ENCODE measurements at regions of chr1 and their contacts with region 1.

Region 1: DNA sequence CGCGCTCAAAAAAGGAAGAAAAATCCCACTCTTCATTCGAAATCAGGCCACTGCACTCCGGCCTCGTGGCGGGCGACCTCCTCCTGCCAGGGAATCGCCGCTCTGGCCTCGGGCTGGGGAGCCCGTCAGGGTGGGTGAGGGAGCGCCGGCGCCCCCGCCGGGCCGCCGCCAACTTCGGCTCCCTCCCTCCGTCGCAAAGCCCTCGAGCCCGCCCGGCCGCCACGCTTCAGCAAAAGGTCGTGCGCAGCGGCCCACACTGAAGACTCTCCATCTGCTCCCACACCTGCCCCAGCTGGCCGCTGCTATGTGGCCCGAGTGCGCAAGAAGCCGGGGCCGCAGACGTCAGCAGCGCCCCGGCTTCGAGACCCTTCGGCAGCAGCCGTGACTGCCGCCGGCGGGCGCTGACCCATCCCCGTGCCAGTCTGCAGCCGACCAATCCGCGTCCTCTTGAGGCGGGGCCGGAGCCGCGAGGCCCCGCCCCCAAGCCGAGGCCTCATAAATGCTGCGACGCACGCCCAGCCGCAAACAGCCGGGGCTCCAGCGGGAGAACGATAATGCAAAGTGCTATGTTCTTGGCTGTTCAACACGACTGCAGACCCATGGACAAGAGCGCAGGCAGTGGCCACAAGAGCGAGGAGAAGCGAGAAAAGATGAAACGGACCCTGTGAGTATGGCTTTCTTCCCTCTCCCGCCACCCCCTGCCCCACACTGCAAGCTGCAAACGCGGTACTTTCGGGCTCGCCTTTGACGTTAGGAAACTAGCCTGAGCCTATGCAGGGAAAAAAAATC is at the start of gene RGS2:
- DNase-seq: peak; percentile 90 to 94 (median 93)
- H3K4me3 ChIP-seq: peak within 1 kb of the TSS; percentile 90 to 100 (median 99)
- H3K4me3 Mint-ChIP-seq: peak within 1 kb of the TSS; percentile 98 to 100
- H3K27ac ChIP-seq: peak within 1 kb of the TSS; percentile 89 to 93
- H3K27ac Mint-ChIP-seq: peak within 1 kb of the TSS; percentile 97 to 100 (median 99)
- H3K4me1 ChIP-seq: peaks cover 38 to 51% of the 10 kb centered on the region in 2 donors
- H3K4me1 Mint-ChIP-seq: peaks cover 48% of the 10 kb centered on the region
- H3K27me3 ChIP-seq: no peaks in the 10 kb centered on the region
- H3K27me3 Mint-ChIP-seq: peaks cover 0 to 15% (median 0%) of the 10 kb centered on the region in 3 donors
- CTCF ChIP-seq: no peak
- polyA plus RNA-seq, gene RGS2: 974 to 3,307 (median 1,708) TPM

Region 2: DNA sequence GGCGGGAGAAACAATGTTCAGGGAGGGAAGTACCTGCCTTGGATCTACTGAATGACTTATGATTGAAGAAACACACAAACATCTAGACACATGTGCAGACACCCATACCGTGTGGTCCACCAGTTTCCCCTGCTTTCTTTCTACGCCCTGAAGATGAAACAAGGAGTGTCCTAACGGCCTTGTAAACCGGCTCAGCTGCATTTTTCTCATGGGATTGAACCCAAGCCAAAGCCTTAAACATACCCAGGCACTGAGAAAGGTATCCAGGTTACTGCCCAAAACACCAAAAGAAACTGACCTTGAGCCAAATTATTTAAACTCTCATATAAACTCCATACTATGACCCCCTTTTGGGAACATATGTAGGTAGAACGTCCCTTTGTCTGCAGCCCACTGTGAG is 1280.4 kb before region 1 on chr1:
- intact Hi-C with region 1: no loop called
- DNase-seq: no peak
- H3K4me3 ChIP-seq: no peak overlapping the region
- H3K4me3 Mint-ChIP-seq: no peak overlapping the region
- H3K27ac ChIP-seq: no peak overlapping the region
- H3K27ac Mint-ChIP-seq: no peak overlapping the region
- H3K4me1 ChIP-seq: peaks cover 0 to 6% of the 10 kb centered on the region in 2 donors
- H3K4me1 Mint-ChIP-seq: peaks cover 12% of the 10 kb centered on the region
- H3K27me3 ChIP-seq: no peaks in the 10 kb centered on the region
- H3K27me3 Mint-ChIP-seq: peaks cover 0 to 2% (median 0%) of the 10 kb centered on the region in 3 donors
- CTCF ChIP-seq: no peak

Region 3: DNA sequence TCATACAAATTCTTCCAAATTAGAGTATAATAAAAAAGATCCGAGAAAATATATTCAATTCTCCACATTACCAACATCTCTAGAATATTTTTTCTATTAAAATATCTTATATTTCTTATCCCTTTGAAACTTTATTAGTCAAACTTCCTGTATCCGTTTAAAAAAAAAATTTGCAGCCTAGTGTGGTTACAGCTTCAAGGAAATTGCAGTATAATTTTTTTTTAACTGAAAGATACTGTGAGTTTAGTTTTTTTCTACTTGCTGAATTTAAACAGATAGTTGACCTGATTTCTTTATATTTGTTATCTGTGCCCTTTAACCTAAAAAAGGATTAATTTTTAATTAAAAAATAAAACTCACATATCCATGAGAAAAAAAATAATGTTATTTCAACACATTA is 648.9 kb before region 1 on chr1:
- intact Hi-C with region 1: loop called in 1 of 2 experiments (anchors 5 kb)
- DNase-seq: peak in 2 of 3 donors; percentile 23 to 62
- H3K4me3 ChIP-seq: peak overlapping the region; percentile 83 to 99 (median 88)
- H3K4me3 Mint-ChIP-seq: peak overlapping the region; percentile 73 to 94
- H3K27ac ChIP-seq: peak overlapping the region in 1 of 2 donors; percentile 85
- H3K27ac Mint-ChIP-seq: peak overlapping the region in 6 of 7 donors; percentile 41 to 98 (median 94)
- H3K4me1 ChIP-seq: peaks cover 52 to 71% of the 10 kb centered on the region in 2 donors
- H3K4me1 Mint-ChIP-seq: peaks cover 42% of the 10 kb centered on the region
- H3K27me3 ChIP-seq: no peaks in the 10 kb centered on the region
- H3K27me3 Mint-ChIP-seq: no peaks in the 10 kb centered on the region
- CTCF ChIP-seq: no peak

Region 4: GRCh38 chr1:192609110-192610079 is 199.3 kb before region 1 on chr1:
- intact Hi-C with region 1: loop called (anchors 5 to 10 kb)
- DNase-seq: peak; percentile 84 to 90 (median 87)
- H3K4me3 ChIP-seq: peak overlapping the region; percentile 8 to 59 (median 43)
- H3K4me3 Mint-ChIP-seq: peak overlapping the region in 1 of 2 donors; percentile 77
- H3K27ac ChIP-seq: peak overlapping the region in 1 of 2 donors; percentile 21
- H3K27ac Mint-ChIP-seq: peak overlapping the region; percentile 57 to 89 (median 86)
- H3K4me1 ChIP-seq: peaks cover 12 to 18% of the 10 kb centered on the region in 2 donors
- H3K4me1 Mint-ChIP-seq: peaks cover 18% of the 10 kb centered on the region
- H3K27me3 ChIP-seq: no peaks in the 10 kb centered on the region
- H3K27me3 Mint-ChIP-seq: peaks cover 0 to 4% (median 0%) of the 10 kb centered on the region in 3 donors
- CTCF ChIP-seq: no peak

Region 5: DNA sequence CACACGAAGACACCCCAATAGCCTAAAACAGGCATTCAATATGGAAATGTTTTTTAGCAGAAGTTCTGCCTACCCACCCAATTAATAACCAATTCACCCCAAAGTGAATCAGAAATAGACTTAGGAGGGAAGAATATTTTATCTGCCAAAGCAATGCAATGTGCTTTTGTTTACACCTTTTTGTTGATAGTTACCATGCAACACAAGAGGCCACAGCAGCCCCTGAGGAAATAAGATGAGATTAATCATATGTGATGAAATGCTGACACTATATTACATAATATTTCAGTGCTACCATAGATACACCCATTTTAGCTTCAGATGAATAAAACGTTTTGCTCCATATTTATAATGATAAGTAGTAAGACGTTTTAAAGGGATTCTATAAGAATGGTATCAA is 60.8 kb before region 1 on chr1:
- intact Hi-C with region 1: no loop called
- DNase-seq: peak; percentile 2 to 46 (median 33)
- H3K4me3 ChIP-seq: no peak overlapping the region
- H3K4me3 Mint-ChIP-seq: no peak overlapping the region
- H3K27ac ChIP-seq: no peak overlapping the region
- H3K27ac Mint-ChIP-seq: no peak overlapping the region
- H3K4me1 ChIP-seq: no peaks in the 10 kb centered on the region
- H3K4me1 Mint-ChIP-seq: no peaks in the 10 kb centered on the region
- H3K27me3 ChIP-seq: no peaks in the 10 kb centered on the region
- H3K27me3 Mint-ChIP-seq: peaks cover 0 to 1% (median 0%) of the 10 kb centered on the region in 3 donors
- CTCF ChIP-seq: no peak

Region 6: GRCh38 chr1:192936313-192937018 is 127.8 kb after region 1 on chr1:
- intact Hi-C with region 1: loop called (anchors 5 kb)
- DNase-seq: peak; percentile 88 to 95 (median 94)
- H3K4me3 ChIP-seq: peak overlapping the region in 1 of 3 experiments; percentile 33
- H3K4me3 Mint-ChIP-seq: no peak overlapping the region
- H3K27ac ChIP-seq: peak overlapping the region; percentile 72 to 97
- H3K27ac Mint-ChIP-seq: peak overlapping the region; percentile 96 to 100 (median 99)
- H3K4me1 ChIP-seq: peaks cover 55 to 66% of the 10 kb centered on the region in 2 donors
- H3K4me1 Mint-ChIP-seq: peaks cover 58% of the 10 kb centered on the region
- H3K27me3 ChIP-seq: no peaks in the 10 kb centered on the region
- H3K27me3 Mint-ChIP-seq: peaks cover 1 to 2% (median 2%) of the 10 kb centered on the region in 3 donors
- CTCF ChIP-seq: no peak

Region 7: GRCh38 chr1:193019442-193020026 is 210.8 kb after region 1 on chr1:
- intact Hi-C with region 1: loop called (anchors 5 kb)
- DNase-seq: peak; percentile 50 to 85 (median 63)
- H3K4me3 ChIP-seq: no peak overlapping the region
- H3K4me3 Mint-ChIP-seq: no peak overlapping the region
- H3K27ac ChIP-seq: peak overlapping the region in 1 of 2 donors; percentile 48
- H3K27ac Mint-ChIP-seq: peak overlapping the region in 4 of 7 donors; percentile 37 to 64 (median 44)
- H3K4me1 ChIP-seq: peaks cover 3 to 6% of the 10 kb centered on the region in 2 donors
- H3K4me1 Mint-ChIP-seq: peaks cover 4% of the 10 kb centered on the region
- H3K27me3 ChIP-seq: no peaks in the 10 kb centered on the region
- H3K27me3 Mint-ChIP-seq: no peaks in the 10 kb centered on the region
- CTCF ChIP-seq: peak; percentile 71